HepG2 (cell line): ENCODE measurements at regions of chr2 and their contacts with region 1.

Region 1: GRCh38 chr2:60002158-60002867 is 551.1 kb downstream of the BCL11A start:
- DNase-seq: no peak
- ATAC-seq: peak; percentile 46; the same call in 1 of the 3 replicates
- H3K4me3 ChIP-seq: no peak overlapping the region
- H3K27ac ChIP-seq: no peak overlapping the region
- H3K4me1 ChIP-seq: no peaks in the 10 kb centered on the region
- H3K27me3 ChIP-seq: no peaks in the 10 kb centered on the region
- CTCF ChIP-seq: peak; percentile 15; the same call in 1 of the 2 replicates
- EP300 ChIP-seq: no peak
- POLR2A ChIP-seq: no peak
- RAD21 ChIP-seq: no peak

Region 2: DNA sequence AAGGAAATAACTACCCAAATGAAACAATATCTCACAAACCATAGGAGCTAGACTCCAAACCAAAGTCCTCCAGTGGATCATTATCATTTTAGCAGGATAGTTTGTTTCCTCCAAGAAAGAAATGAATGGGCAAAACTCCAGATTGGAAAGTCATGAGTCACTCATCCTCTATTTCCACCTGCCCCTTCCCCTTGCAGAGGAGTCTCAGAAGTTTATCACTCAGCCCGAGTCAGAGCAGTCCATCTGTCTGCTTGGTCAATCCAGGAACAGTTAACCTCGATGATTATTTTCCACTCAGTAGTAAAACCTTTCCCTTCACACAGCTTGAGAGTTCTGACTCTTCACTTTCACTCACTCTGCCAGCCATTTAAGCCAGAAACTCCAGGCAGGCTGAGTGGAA is 89.0 kb after region 1 on chr2:
- CTCF ChIA-PET with region 1: no interaction called
- POLR2A ChIA-PET with region 1: no interaction called
- in situ Hi-C with region 1: no loop called
- intact Hi-C with region 1: no loop called
- DNase-seq: no peak
- ATAC-seq: no peak
- H3K4me3 ChIP-seq: no peak overlapping the region
- H3K27ac ChIP-seq: no peak overlapping the region
- H3K4me1 ChIP-seq: peaks cover 35% of the 10 kb centered on the region
- H3K27me3 ChIP-seq: peaks cover 0 to 8% of the 10 kb centered on the region in 2 experiments; a peak in 1 of 5 replicates
- CTCF ChIP-seq: no peak
- EP300 ChIP-seq: no peak
- POLR2A ChIP-seq: no peak
- RAD21 ChIP-seq: no peak

Region 3: DNA sequence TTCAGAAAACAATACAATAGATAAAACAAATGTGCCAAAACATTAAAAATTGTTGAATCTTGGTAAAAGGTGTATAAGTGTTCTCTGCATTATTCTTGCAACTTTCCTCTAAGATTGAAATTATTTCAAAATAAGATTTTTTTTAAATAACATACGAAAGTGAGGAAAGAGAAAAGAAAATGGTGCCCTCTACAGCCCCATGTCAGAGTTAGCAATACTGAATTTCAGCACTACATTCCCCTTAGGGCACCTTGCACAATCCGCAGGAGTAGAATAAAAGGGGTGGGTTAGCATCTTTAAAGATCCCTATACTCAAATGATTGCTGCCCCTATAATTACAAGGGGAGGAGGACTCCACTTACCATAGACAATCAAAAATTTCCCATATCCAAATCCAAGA is 117.5 kb after region 1 on chr2:
- CTCF ChIA-PET with region 1: no interaction called
- POLR2A ChIA-PET with region 1: no interaction called
- in situ Hi-C with region 1: no loop called
- intact Hi-C with region 1: loop called (anchors 10 kb)
- DNase-seq: no peak
- ATAC-seq: no peak
- H3K4me3 ChIP-seq: no peak overlapping the region
- H3K27ac ChIP-seq: no peak overlapping the region
- H3K4me1 ChIP-seq: no peaks in the 10 kb centered on the region
- H3K27me3 ChIP-seq: no peaks in the 10 kb centered on the region
- CTCF ChIP-seq: 0 out of 2 replicates have a peak, but pooled peaks have one; percentile 16
- EP300 ChIP-seq: no peak
- POLR2A ChIP-seq: no peak
- RAD21 ChIP-seq: no peak